WTC11 (cell line): ENCODE measurements at regions of chr19 and their contacts with region 1.

Region 1: DNA sequence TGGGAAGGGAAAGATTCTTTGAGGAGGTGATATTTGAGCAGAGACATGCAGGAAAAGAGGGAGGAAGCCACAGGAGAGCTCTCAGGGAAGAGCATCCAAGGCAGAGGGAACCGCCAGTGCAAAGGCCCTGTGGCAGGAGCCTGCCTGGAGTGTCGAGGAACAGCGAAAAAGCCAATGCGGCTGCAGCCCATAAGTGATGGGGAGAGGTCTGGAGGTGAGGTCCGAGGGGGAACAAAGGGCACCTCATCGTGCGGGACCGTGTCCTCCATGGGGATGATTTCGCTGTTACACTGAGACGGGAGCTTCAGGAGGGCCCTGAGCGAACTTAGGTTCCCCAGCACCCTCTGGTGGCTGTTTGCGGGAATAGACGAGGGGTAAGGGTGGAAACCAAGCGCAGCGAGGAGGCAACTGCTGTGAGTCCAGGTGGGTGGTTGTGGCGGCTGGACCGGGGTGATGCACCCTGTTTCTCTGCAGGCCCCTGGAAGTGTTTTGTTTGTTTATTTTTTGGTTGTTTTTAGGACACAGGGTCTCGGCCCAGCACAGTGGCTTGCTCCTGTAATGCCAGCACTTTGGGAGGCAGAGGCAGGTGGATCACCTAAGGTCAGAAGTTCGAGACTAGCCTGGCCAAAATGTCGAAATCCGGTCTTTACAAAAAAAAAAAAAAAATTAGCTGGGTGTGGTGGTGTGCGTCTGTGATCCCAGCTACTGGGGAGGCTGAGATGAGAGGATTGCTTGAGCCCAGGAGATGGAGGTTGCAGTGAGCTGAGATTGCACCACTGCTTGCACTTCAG is 5.9 kb upstream of the EHD2 start:
- DNase-seq: peak; percentile 92
- ATAC-seq: peak; percentile 96
- H3K4me3 Mint-ChIP-seq: no peak overlapping the region; the same call in 1 of the 2 replicates
- H3K27ac Mint-ChIP-seq: no peak overlapping the region
- H3K4me1 Mint-ChIP-seq: 0 out of 2 replicates have a peak, but pooled peaks cover 2% of the 10 kb centered on the region
- H3K27me3 Mint-ChIP-seq: peaks cover 5% of the 10 kb centered on the region
- CTCF ChIP-seq: peak; percentile 71

Region 2: DNA sequence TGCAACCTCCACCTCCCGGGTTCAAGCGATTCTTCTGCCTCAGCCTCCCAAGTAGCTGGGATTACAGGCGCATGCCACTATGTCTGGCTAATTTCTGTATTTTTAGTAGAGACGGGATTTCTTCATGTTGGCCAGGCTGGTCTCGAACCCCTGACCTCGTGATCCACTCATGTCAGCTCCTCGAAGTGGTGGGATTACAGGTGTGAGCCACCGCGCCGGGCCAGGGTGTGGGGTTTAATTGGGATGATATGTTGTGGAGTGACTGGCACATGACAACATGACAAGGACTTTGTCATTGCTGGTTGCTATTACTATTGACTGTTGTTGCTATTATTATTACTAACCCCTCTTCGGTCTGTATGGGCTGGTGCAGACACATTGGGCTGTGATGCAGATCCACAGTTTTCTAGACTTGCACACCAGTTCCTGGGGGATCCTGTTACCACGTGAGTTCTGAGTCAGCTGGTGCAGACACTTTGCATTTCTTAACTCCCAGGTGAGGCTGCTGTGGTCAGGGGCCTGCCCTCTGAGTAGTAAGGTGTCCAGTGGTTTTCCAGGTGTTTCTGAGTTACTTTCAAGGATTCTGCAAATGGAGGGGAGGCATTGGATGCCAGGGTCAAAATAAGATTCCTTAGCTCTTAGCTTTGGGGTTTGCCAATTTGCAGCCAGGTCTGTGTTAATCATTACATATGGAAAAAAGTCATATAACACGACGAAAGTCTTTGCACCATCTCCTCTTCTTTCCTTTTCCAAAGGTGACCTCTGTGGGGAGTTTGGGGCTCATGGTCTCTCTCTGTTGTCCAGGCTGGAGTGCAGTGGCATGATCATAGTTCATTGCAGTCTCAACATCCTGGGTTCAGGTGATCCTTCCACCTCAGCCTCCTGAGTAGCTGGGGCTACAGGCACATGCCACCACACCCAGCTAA is 79.2 kb before region 1 on chr19:
- CTCF ChIA-PET with region 1: no interaction called
- POLR2A ChIA-PET with region 1: no interaction called
- DNase-seq: no peak
- ATAC-seq: no peak
- H3K4me3 Mint-ChIP-seq: no peak overlapping the region
- H3K27ac Mint-ChIP-seq: peak overlapping the region; percentile 74; the same call in 1 of the 2 replicates
- H3K4me1 Mint-ChIP-seq: peaks cover 52% of the 10 kb centered on the region
- H3K27me3 Mint-ChIP-seq: no peaks in the 10 kb centered on the region
- CTCF ChIP-seq: no peak

Region 3: DNA sequence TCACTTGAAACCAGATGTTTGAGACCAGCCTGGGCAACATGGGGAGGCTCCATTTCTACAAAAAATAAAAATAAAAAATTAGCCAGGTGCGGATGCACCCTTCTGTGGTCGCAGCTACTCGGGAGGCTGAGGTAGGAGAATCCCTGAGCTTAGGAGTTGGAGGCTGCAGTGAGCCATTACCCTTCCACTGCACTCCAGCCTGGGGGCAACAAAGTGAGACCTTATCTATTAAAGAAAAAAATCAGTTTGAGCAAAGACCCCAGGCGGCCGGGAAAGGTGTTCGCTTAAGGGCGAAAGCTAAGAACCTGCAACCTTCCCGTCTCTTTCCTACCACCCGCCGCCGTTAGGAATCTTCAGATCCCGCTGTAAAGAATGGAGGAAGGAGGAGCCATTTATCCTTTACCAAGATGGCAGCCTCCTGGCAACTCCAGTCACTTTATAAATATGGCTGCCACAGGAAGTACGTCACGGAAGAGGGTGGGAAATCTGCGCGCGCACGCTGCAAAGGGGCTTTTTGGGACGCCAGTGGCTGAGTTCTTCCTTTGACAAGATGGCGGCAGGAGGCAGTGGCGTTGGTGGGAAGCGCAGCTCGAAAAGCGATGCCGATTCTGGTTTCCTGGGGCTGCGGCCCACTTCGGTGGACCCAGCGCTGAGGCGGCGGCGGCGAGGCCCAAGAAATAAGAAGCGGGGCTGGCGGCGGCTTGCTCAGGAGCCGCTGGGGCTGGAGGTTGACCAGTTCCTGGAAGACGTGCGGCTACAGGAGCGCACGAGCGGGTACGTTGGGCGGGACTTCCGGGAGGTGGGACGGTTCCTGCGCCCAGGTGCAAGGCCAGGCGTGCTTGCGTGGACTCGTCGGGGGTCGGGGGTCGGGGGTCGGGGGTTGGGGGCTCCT is 37.9 kb after region 1 on chr19 and contains the start of gene NOP53:
- CTCF ChIA-PET with region 1: interaction called, 102 read pairs
- POLR2A ChIA-PET with region 1: no interaction called
- DNase-seq: peak; percentile 95
- ATAC-seq: peak; percentile 69
- H3K4me3 Mint-ChIP-seq: peak within 1 kb of the TSS; percentile 97
- H3K27ac Mint-ChIP-seq: peak within 1 kb of the TSS; percentile 97
- H3K4me1 Mint-ChIP-seq: peaks cover 13% of the 10 kb centered on the region
- H3K27me3 Mint-ChIP-seq: no peaks in the 10 kb centered on the region; the same call in 1 of the 2 replicates
- CTCF ChIP-seq: no peak
- total RNA-seq, gene NOP53: 289 to 315 TPM (median 310 TPM) in 3 replicates